ENCODE measurements at regions of chr17 and their contacts with region 1.

Region 1: GRCh38 chr17:8294814-8295316 is 335 bp downstream of the SLC25A35 start:
- DNase-seq: no peak
- ATAC-seq: no peak
- H3K4me3 ChIP-seq: peak overlapping the region; percentile 62
- H3K27ac ChIP-seq: peak overlapping the region; percentile 41
- H3K4me1 ChIP-seq: peaks cover 21% of the 10 kb centered on the region
- H3K27me3 ChIP-seq: no peaks in the 10 kb centered on the region
- CTCF ChIP-seq: no peak
- EP300 ChIP-seq: no peak
- POLR2A ChIP-seq: no peak
- RAD21 ChIP-seq: no peak

Region 2: DNA sequence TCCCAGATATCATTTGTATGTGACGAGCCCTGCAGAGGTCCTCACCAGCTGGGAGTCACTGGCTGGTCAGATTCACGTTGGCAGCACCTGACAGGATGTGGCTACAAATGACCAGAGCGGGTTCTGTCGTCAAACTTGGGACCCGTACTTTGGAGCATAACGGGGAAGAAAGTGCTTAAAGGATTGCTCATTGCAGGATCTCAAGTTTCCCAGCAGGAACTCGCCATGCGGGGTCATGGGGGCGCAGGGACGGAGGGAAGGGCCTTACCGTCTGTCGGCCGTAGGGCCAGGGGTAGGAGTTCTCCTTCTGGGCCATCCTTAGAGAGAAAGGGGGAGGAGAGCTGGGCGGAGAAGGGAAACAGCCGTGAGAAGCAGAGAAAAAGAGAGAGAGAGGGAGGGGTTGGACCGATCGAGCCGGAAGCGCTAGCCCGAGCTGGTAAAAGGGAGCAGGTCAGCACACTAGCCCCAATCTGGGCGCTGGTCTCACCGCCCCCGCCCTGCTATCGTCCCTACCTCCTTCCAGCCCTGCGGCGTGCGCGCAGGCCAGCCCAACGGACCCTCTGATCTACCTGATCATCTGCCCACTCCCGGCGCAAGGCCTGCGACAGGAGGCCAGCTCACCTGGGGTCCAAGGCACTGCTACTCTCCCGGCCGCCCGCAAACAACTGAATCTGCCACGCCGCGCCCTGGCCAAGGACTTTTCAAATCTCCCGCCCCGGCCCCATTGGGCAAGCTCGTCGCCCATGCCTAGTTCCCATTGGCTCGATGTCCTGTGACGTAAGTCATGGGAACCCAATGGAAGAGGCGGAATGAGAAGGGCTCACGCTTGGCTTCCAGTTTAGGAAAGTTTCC is 84.7 kb before region 1 on chr17 and contains the start of gene AURKB:
- CTCF ChIA-PET with region 1: interaction called, 5 read pairs
- POLR2A ChIA-PET with region 1: interaction called, 12 read pairs
- RAD21 ChIA-PET with region 1: interaction called, 4 read pairs
- SMC1A ChIA-PET with region 1: interaction called, 16 read pairs
- in situ Hi-C with region 1: no loop called
- intact Hi-C with region 1: no loop called
- DNase-seq: peak; percentile 91
- ATAC-seq: peak; percentile 94
- H3K4me3 ChIP-seq: peak within 1 kb of the TSS; percentile 95
- H3K27ac ChIP-seq: peak within 1 kb of the TSS; percentile 83
- H3K4me1 ChIP-seq: no peaks in the 10 kb centered on the region
- H3K27me3 ChIP-seq: no peaks in the 10 kb centered on the region
- CTCF ChIP-seq: no peak
- EP300 ChIP-seq: no peak; a peak in 1 of 4 replicates
- POLR2A ChIP-seq: peak; percentile 96
- RAD21 ChIP-seq: no peak
- polyA plus RNA-seq, gene AURKB: 107 to 121 TPM

Region 3: DNA sequence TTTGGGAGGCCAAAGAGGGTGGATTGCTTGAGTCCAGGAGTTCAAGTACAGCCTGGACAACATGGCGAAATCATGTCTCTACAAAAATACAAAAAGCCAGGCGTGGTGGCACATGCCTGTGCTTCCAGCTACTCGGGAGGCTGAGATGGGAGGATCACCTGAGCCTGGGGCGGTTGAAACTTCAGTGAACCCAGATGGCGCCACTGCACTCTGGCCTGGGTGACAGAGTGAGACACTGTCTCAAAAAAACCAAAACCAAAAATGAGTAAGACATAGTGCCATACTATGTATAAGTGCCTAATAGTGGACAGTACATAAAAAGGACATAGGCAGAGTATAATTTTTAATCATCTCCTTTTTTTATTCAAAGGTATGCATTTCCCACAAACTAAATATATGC is 51.0 kb before region 1 on chr17:
- CTCF ChIA-PET with region 1: interaction called, 16 read pairs
- POLR2A ChIA-PET with region 1: interaction called, 30 read pairs
- RAD21 ChIA-PET with region 1: interaction called, 26 read pairs
- SMC1A ChIA-PET with region 1: interaction called, 10 read pairs
- in situ Hi-C with region 1: no loop called
- intact Hi-C with region 1: loop called (anchors 2 kb)
- DNase-seq: no peak
- ATAC-seq: no peak
- H3K4me3 ChIP-seq: no peak overlapping the region
- H3K27ac ChIP-seq: no peak overlapping the region
- H3K4me1 ChIP-seq: peaks cover 10% of the 10 kb centered on the region
- H3K27me3 ChIP-seq: no peaks in the 10 kb centered on the region
- CTCF ChIP-seq: 0 out of 6 replicates have a peak, but pooled peaks of 1 of the 3 experiments have one; percentile 11
- EP300 ChIP-seq: no peak
- POLR2A ChIP-seq: no peak
- RAD21 ChIP-seq: no peak

Measured in GM12878 (cell line).